Heart left ventricle (tissue), 16 donors: ENCODE measurements at regions of chr14 and their contacts with region 1.

Region 1: DNA sequence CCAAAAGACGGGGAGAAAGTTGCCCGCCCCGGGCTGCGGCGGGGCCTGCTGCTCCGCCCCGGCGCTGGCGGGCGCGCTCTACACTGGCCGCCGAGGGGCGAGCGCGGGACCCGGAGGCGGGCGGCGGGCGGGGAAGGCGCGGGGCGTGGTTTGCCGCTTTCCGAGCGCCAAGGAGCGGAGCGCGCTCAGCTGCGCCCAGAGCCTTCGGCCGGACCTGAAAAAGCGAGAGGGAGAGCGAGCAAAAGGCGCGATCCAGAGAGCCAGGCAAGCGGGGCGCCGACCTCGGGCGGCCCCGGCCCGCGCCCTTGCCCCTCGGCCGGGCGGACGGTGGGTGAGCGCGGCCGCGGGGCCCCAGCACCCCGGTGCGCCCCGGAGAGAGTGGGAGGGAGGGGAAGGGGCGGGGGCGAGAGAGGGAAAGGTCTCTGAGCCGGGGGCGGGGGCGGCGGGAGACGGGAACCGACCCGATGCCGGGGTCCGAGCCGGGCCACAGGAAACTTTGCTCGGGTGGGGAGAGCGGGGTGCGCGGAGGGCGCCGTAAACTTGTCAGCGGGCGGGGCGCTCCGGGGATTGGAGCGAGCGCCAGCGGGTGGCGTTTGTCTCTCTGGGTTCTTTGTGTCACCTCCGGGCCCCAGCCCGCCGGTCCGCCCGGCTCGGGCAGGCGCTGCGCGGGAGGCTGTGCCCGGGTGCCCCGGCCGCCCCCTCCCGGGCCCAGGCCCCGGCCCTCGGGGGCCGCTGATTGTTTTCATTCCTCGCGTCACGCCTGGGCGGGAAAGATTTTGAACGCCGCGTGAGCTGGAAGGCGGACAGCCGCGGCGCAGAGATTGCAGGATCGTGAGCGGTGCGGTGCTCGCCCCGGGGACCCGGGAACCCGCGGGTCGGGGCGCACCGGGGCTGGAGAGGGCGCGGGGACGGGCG is at the start of gene SYNE2:
- DNase-seq: peak; percentile 83 to 90 (median 83)
- ATAC-seq: peak; percentile 77 to 95 (median 92)
- H3K4me3 ChIP-seq: peak within 1 kb of the TSS; percentile 59 to 98 (median 80)
- H3K27ac ChIP-seq: peak within 1 kb of the TSS; percentile 88 to 97 (median 92)
- H3K4me1 ChIP-seq: peaks cover 0 to 44% (median 35%) of the 10 kb centered on the region in 12 donors
- H3K27me3 ChIP-seq: peaks cover 0 to 20% (median 0%) of the 10 kb centered on the region in 9 donors
- CTCF ChIP-seq: peak in 10 of 12 donors; percentile 18 to 59 (median 44)
- POLR2A ChIP-seq: peak in 1 of 2 donors; percentile 75
- total RNA-seq, gene SYNE2: 83.2 to 255 (median 111) TPM

Region 2: GRCh38 chr14:63308723-63309317 is 544.3 kb before region 1 on chr14:
- intact Hi-C with region 1: no loop called
- DNase-seq: no peak
- ATAC-seq: no peak
- H3K4me3 ChIP-seq: no peak overlapping the region
- H3K27ac ChIP-seq: no peak overlapping the region
- H3K4me1 ChIP-seq: no peaks in the 10 kb centered on the region
- H3K27me3 ChIP-seq: no peaks in the 10 kb centered on the region
- CTCF ChIP-seq: peak; percentile 7 to 44 (median 30)
- POLR2A ChIP-seq: no peak

Region 3: DNA sequence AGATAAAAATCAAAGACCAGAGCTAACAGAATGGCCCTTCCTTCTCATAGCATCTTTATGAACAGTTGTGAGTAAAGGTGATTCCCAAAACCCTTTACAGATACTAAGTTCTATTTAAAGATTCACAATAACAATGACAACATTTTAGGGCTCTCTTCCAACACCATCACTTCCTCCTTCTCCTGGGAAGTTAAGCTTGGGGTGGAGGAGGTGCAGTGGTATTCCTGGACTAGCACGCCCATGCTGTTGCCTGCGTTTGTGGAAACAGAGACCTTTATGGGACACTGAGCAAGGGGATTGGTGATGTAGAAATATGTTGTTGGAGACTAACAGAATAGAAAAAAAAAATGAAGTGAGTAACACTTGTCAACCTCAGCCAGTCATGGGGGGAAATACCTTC is 22.2 kb after region 1 on chr14:
- intact Hi-C with region 1: loop called in 1 of 10 experiments (anchors 2 kb)
- DNase-seq: peak in 4 of 5 donors; percentile 47 to 77 (median 65)
- ATAC-seq: peak; percentile 70 to 95 (median 88)
- H3K4me3 ChIP-seq: no peak overlapping the region
- H3K27ac ChIP-seq: peak overlapping the region; percentile 58 to 82 (median 73)
- H3K4me1 ChIP-seq: peaks cover 0 to 65% (median 45%) of the 10 kb centered on the region in 12 donors
- H3K27me3 ChIP-seq: no peaks in the 10 kb centered on the region
- CTCF ChIP-seq: no peak
- POLR2A ChIP-seq: no peak

Region 4: DNA sequence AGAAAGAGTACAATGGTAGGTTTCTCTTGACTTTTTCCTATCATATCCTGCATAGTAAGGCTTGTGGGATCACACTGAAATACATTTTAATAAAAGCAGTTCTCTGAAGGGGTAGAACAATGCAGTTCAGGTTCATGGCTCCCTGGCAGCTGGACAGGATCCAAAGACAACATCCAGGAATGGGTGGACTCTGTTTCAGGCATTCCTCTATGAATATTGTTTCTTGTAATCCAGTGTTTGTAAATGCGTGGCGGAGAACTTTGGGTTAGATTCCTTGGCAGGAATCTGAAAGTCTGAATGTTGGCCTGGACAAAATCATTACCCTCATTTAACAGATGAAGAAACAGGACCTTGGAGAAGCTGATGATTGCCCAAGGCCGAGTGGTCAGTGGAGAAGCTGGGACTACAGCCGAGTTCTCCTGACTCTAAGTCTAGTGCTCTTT is 43.2 kb after region 1 on chr14:
- intact Hi-C with region 1: loop called in 5 of 10 experiments (anchors 5 kb)
- DNase-seq: peak in 4 of 5 donors; percentile 60 to 82 (median 73)
- ATAC-seq: peak; percentile 51 to 87 (median 70)
- H3K4me3 ChIP-seq: no peak overlapping the region
- H3K27ac ChIP-seq: peak overlapping the region; percentile 35 to 76 (median 70)
- H3K4me1 ChIP-seq: peaks cover 12 to 96% (median 66%) of the 10 kb centered on the region in 12 donors
- H3K27me3 ChIP-seq: peaks cover 0 to 33% (median 0%) of the 10 kb centered on the region in 9 donors
- CTCF ChIP-seq: no peak
- POLR2A ChIP-seq: no peak

Region 5: DNA sequence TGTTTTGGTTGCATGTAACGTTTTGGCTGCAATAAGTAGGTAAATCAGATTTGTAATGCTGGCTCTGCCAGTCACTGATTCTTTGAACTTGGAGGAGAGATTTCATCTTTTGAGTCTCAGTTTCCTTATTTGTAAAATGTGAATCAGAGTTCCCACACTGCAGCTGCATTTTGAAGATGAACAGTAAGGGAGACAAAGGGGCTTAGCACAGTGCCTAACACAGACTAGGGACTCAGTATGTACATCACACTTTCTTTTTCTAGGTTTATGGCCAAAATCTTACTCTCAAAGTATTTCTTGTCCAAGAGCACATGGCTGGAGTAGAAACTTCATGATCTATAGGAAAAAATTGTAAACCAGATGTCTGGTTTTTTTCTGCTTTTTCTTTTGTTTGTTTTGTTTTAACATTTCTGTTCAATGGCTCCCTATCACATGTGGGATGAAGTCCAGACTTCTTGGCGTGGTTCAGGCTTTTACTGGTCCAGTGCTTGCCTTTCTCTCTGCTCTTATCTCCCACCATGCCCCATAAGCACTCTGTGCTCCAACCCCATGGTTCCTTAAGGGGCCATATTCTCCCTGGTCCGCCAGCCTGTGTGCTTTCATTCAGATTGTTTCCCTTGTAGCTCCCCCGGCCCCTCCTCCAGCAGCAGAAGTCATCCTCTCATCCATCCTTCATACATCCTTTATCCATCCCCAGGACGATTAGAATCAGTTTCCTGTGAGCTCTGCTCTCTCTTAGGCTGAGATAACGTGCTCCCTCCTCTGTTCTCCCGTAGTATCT is 57.7 kb after region 1 on chr14:
- intact Hi-C with region 1: loop called in 1 of 10 experiments (anchors 5 kb)
- DNase-seq: no peak
- ATAC-seq: no peak
- H3K4me3 ChIP-seq: no peak overlapping the region
- H3K27ac ChIP-seq: no peak overlapping the region
- H3K4me1 ChIP-seq: peaks cover 0 to 31% (median 14%) of the 10 kb centered on the region in 12 donors
- H3K27me3 ChIP-seq: peaks cover 0 to 3% (median 0%) of the 10 kb centered on the region in 9 donors
- CTCF ChIP-seq: no peak
- POLR2A ChIP-seq: no peak

Region 6: GRCh38 chr14:63938198-63939005 is 85.3 kb after region 1 on chr14:
- intact Hi-C with region 1: loop called in 1 of 10 experiments (anchors 5 kb)
- DNase-seq: no peak
- ATAC-seq: peak in 1 of 4 donors; percentile 33
- H3K4me3 ChIP-seq: no peak overlapping the region
- H3K27ac ChIP-seq: no peak overlapping the region
- H3K4me1 ChIP-seq: peaks cover 0 to 15% (median 0%) of the 10 kb centered on the region in 12 donors
- H3K27me3 ChIP-seq: no peaks in the 10 kb centered on the region
- CTCF ChIP-seq: no peak
- POLR2A ChIP-seq: no peak

Region 7: DNA sequence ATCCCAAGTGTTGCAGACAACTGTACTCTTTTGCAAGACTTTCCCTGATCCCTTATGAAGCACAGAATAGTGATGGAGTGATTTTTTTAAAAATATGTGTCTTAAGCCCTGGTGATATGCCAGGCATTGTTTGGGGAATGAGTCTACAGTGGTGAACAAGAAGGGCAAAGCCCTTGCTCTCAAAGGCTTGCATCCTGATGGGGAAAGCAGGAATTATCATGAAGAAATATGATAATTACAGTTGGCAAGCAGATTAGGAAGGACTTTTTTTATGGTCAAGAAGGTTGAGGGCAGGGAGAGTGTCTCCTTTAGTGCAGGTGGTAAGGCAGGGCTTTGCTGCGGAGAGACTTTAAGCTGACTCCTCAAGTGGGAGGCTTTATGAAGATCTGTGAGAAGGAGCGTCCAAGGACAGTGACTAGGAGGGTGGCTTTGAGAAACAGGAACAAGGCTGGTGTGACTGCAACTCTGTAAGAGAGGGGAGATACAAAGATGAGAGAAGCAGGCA is 99.9 kb after region 1 on chr14:
- intact Hi-C with region 1: loop called in 8 of 10 experiments (anchors 1 to 10 kb)
- DNase-seq: no peak
- ATAC-seq: peak in 3 of 4 donors; percentile 33 to 49 (median 48)
- H3K4me3 ChIP-seq: no peak overlapping the region
- H3K27ac ChIP-seq: peak overlapping the region in 6 of 12 donors; percentile 19 to 50 (median 27)
- H3K4me1 ChIP-seq: peaks cover 0 to 24% (median 11%) of the 10 kb centered on the region in 12 donors
- H3K27me3 ChIP-seq: no peaks in the 10 kb centered on the region
- CTCF ChIP-seq: no peak
- POLR2A ChIP-seq: no peak

Region 8: GRCh38 chr14:63993992-63994391 is 140.9 kb after region 1 on chr14:
- intact Hi-C with region 1: loop called in 2 of 10 experiments (anchors 5 to 10 kb)
- DNase-seq: no peak
- ATAC-seq: no peak
- H3K4me3 ChIP-seq: no peak overlapping the region
- H3K27ac ChIP-seq: no peak overlapping the region
- H3K4me1 ChIP-seq: no peaks in the 10 kb centered on the region
- H3K27me3 ChIP-seq: no peaks in the 10 kb centered on the region
- CTCF ChIP-seq: peak in 6 of 12 donors; percentile 14 to 46 (median 34)
- POLR2A ChIP-seq: no peak